Common myeloid progenitor, CD34-positive (primary cell): ENCODE measurements at regions of chr12 and their contacts with region 1.

Region 1: GRCh38 chr12:53465679-53466078 is 13.8 kb downstream of the PCBP2 start:
- DNase-seq: no peak
- H3K4me3 ChIP-seq: no peak overlapping the region
- H3K27ac ChIP-seq: no peak overlapping the region
- H3K4me1 ChIP-seq: no peaks in the 10 kb centered on the region
- H3K27me3 ChIP-seq: no peaks in the 10 kb centered on the region

Region 2: GRCh38 chr12:53427905-53428594 is 37.6 kb before region 1 on chr12:
- CTCF ChIA-PET with region 1: no interaction called
- POLR2A ChIA-PET with region 1: no interaction called
- DNase-seq: no peak
- H3K4me3 ChIP-seq: no peak overlapping the region
- H3K27ac ChIP-seq: no peak overlapping the region
- H3K4me1 ChIP-seq: peaks cover 0 to 9% (median 3%) of the 10 kb centered on the region in 4 experiments
- H3K27me3 ChIP-seq: no peaks in the 10 kb centered on the region

Region 3: DNA sequence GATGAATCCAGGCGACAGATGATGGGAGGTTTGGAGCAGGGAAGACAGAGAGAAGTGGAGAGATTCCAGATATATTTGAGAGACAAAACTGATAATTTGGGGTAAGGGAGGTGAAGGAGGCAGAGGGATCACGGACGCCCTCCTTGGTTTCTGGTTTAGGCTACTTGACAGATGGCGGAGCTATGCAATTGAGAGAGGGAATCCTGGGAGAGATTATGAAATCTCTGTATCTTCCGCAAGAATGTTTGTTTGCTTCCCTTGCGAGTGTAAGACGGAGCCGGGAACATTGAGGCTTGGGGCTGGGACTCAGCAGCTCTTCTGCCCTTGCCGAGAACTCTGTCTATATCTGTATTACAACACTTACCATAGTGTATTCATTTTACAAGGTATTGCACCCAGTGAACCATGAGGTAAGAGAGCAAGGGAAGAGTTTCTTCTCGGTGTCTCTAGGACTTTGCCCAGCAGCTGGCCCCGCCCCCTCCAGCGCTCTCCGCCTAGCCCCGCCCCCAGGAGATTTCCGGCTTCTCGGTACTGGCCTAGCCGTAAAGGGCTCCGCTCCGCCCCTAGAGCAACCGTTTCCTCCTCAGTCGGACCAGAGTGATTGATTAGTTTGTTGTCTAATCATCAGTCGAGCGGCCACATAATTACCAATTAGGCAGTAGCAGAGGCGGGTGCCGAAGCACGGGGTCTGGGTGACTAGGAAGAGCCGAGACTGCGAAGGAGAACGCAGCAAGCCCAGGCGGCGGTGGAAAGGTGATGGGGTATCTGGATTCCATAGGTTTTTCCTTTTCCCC is 24.4 kb before region 1 on chr12 and contains the start of gene PRR13:
- CTCF ChIA-PET with region 1: no interaction called
- POLR2A ChIA-PET with region 1: no interaction called
- DNase-seq: peak; percentile 99 to 100 (median 100)
- H3K4me3 ChIP-seq: peak within 1 kb of the TSS; percentile 67 to 98 (median 94)
- H3K27ac ChIP-seq: peak within 1 kb of the TSS; percentile 78 to 92
- H3K4me1 ChIP-seq: peaks cover 4 to 24% (median 23%) of the 10 kb centered on the region in 4 experiments
- H3K27me3 ChIP-seq: no peaks in the 10 kb centered on the region

Region 4: DNA sequence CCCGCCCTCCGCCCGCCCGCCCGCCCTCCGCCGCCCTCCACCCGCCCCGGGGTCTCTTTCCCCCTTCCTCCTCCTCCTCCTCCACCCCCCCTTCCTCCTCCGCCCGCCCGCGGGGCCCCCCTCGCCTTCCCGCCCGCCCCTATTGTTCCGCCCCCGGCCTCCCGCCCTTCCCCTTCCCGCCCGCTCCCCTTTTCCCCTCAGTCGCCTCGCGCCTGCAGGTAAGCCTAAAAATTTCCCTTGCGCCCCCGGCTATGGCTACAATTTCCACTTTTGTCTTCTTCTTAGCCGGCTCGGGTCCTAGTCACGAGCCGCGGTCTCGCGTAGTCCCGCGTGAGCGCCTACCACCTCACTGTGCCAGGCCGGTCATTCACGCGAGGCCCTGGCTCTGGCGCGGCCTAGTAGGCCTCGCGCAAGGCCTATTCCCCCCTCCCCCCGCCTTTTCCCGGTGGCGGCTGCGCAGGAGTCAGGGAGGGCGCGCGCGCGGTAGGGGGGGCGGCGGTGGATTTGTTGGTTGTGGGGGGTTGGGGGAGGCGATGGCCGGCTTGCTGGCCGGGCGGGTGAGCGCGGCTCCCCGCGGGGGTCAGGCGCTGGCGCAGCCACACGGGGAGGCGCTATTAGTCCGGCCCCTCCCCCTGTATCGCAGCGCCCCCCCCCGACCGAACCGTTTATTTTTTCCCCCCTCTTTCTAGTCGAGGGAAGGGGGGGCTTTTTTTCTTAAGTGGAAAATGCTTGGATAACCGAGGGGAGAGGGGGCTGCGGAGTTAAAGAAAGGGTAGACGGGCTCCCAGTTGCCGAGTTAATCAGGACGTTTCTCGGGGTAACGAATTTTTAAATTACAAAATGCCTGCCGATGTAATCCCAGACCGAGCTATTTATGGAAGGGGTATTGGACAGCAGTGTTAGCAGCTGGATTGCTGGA is 13.3 kb before region 1 on chr12:
- CTCF ChIA-PET with region 1: interaction called, 14 read pairs
- POLR2A ChIA-PET with region 1: interaction called, 5 read pairs
- DNase-seq: peak; percentile 83 to 90 (median 89)
- H3K4me3 ChIP-seq: peak overlapping the region; percentile 55 to 98 (median 89)
- H3K27ac ChIP-seq: peak overlapping the region; percentile 94
- H3K4me1 ChIP-seq: peaks cover 8 to 20% (median 13%) of the 10 kb centered on the region in 4 experiments
- H3K27me3 ChIP-seq: no peaks in the 10 kb centered on the region

Region 5: GRCh38 chr12:53659011-53659551 is 193.4 kb after region 1 on chr12:
- CTCF ChIA-PET with region 1: no interaction called
- POLR2A ChIA-PET with region 1: no interaction called
- DNase-seq: no peak
- H3K4me3 ChIP-seq: no peak overlapping the region
- H3K27ac ChIP-seq: no peak overlapping the region
- H3K4me1 ChIP-seq: no peaks in the 10 kb centered on the region
- H3K27me3 ChIP-seq: no peaks in the 10 kb centered on the region

Region 6: DNA sequence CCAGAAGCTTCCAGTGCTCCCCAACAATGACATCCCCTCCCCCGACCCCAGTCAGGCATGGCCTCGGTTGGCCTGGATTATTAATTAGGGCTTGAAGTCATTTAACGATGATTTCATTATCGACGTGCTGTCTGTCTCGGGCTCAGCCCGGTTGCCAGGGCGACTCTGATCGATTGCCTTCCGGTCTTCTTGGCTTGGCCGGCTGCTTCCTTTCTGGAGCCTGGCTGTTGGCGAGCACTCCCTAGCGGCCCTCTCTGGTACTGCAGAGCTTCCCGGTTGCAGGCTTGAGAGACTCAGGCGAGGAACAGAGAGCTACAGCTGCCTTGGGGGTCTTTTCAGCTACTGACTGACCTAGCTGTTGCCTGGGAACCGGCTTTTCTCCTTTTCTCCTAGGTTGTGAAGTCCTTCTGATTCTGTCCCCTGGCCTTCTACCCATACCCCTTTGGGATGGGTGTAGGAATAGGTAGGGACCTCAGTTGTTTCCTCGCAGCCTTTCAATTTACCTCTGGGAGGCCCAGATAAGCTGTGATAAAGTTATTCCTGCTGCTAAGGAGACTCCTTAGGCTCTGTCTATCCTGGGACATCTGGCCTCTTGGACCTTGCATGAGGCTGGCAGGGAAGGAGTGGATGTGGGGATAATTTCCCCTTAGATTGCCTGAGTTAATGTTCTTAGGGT is 291.6 kb after region 1 on chr12:
- CTCF ChIA-PET with region 1: no interaction called
- POLR2A ChIA-PET with region 1: no interaction called
- DNase-seq: peak; percentile 71 to 82 (median 79)
- H3K4me3 ChIP-seq: peak overlapping the region in 2 of 7 experiments; percentile 48 to 50
- H3K27ac ChIP-seq: no peak overlapping the region
- H3K4me1 ChIP-seq: peaks cover 1 to 64% (median 28%) of the 10 kb centered on the region in 4 experiments
- H3K27me3 ChIP-seq: peaks cover 6 to 82% (median 25%) of the 10 kb centered on the region in 5 experiments